Endothelial cell of umbilical vein (primary cell): ENCODE measurements at regions of chr1 and their contacts with region 1.

Region 1: GRCh38 chr1:221741711-221742554 is at the start of gene DUSP10:
- DNase-seq: peak; percentile 100
- H3K4me3 ChIP-seq: peak within 1 kb of the TSS; percentile 39 to 84 (median 64)
- H3K27ac ChIP-seq: peak within 1 kb of the TSS; percentile 94
- H3K4me1 ChIP-seq: peaks cover 13% of the 10 kb centered on the region
- H3K27me3 ChIP-seq: peaks cover 7 to 13% of the 10 kb centered on the region in 2 experiments
- CTCF ChIP-seq: no peak
- POLR2A ChIP-seq: no peak
- total RNA-seq, gene DUSP10: 1.6 and 1.9 TPM in 2 replicates

Region 2: GRCh38 chr1:220879076-220879508 is 862.8 kb before region 1 on chr1 and contains the start of gene HLX:
- CTCF ChIA-PET with region 1: no interaction called
- POLR2A ChIA-PET with region 1: no interaction called
- dilution Hi-C with region 1: no loop called
- intact Hi-C with region 1: loop called (anchors 1 kb)
- DNase-seq: peak; percentile 89
- H3K4me3 ChIP-seq: peak within 1 kb of the TSS; percentile 80 to 87 (median 82)
- H3K27ac ChIP-seq: peak within 1 kb of the TSS; percentile 35
- H3K4me1 ChIP-seq: peaks cover 41% of the 10 kb centered on the region
- H3K27me3 ChIP-seq: peaks cover 6 to 15% of the 10 kb centered on the region in 2 experiments
- CTCF ChIP-seq: no peak
- POLR2A ChIP-seq: no peak
- total RNA-seq, gene HLX: 33.5 and 39.1 TPM in 2 replicates

Region 3: GRCh38 chr1:221263831-221264767 is 477.8 kb before region 1 on chr1:
- CTCF ChIA-PET with region 1: interaction called, 9 read pairs
- POLR2A ChIA-PET with region 1: interaction called, 3 read pairs
- dilution Hi-C with region 1: no loop called
- intact Hi-C with region 1: loop called (anchors 5 kb)
- DNase-seq: peak; percentile 79
- H3K4me3 ChIP-seq: no peak overlapping the region
- H3K27ac ChIP-seq: peak overlapping the region; percentile 34
- H3K4me1 ChIP-seq: peaks cover 7% of the 10 kb centered on the region
- H3K27me3 ChIP-seq: no peaks in the 10 kb centered on the region
- CTCF ChIP-seq: peak; percentile 64 to 71
- POLR2A ChIP-seq: no peak

Region 4: GRCh38 chr1:221761354-221762002 is 19.5 kb after region 1 on chr1:
- CTCF ChIA-PET with region 1: interaction called, 13 read pairs
- POLR2A ChIA-PET with region 1: no interaction called
- dilution Hi-C with region 1: no loop called
- intact Hi-C with region 1: loop called (anchors 1 kb)
- DNase-seq: no peak
- H3K4me3 ChIP-seq: no peak overlapping the region
- H3K27ac ChIP-seq: peak overlapping the region; percentile 52
- H3K4me1 ChIP-seq: peaks cover 60% of the 10 kb centered on the region
- H3K27me3 ChIP-seq: no peaks in the 10 kb centered on the region
- CTCF ChIP-seq: no peak
- POLR2A ChIP-seq: no peak

Region 5: DNA sequence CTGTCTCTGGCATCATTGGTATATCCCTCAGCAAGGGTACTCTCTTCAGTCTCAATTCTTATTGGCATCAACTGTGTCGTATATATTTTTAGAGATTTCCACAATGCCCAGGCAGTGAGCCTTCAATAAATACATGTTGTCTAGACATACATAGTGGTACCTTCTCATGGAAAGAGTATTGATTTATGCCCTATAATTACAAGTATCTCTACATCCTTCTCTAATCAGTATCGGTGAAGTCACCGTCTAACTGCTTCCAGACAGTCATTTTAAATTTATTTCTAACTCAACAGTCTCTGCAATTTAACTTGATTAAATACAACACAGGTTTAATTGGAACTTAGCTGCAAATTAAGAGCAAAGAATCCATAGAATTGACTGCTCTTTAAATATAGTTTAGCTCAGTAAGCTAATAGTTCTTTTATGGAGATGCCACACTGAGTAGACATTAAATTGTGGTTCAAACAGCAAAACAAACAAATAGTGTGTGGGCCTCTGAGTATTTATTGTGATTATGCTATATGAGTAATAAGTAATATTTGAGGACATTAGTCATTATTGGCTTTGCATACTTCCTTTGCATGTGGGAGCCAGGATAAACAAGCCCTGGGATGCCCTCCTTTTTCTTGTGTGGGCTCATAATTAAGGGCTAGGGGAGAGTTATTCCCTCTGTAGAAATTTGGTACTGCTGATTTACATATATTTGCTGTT is 126.8 kb after region 1 on chr1:
- CTCF ChIA-PET with region 1: no interaction called
- POLR2A ChIA-PET with region 1: interaction called, 4 read pairs
- dilution Hi-C with region 1: no loop called
- intact Hi-C with region 1: loop called (anchors 1 kb)
- DNase-seq: peak; percentile 79
- H3K4me3 ChIP-seq: no peak overlapping the region
- H3K27ac ChIP-seq: peak overlapping the region; percentile 16
- H3K4me1 ChIP-seq: peaks cover 13% of the 10 kb centered on the region
- H3K27me3 ChIP-seq: peaks cover 0 to 2% of the 10 kb centered on the region in 2 experiments
- CTCF ChIP-seq: no peak
- POLR2A ChIP-seq: no peak

Region 6: GRCh38 chr1:222009105-222009730 is 267.3 kb after region 1 on chr1:
- CTCF ChIA-PET with region 1: interaction called, 11 read pairs
- POLR2A ChIA-PET with region 1: no interaction called
- dilution Hi-C with region 1: no loop called
- intact Hi-C with region 1: loop called (anchors 1 kb)
- DNase-seq: peak; percentile 12
- H3K4me3 ChIP-seq: no peak overlapping the region
- H3K27ac ChIP-seq: no peak overlapping the region
- H3K4me1 ChIP-seq: no peaks in the 10 kb centered on the region
- H3K27me3 ChIP-seq: no peaks in the 10 kb centered on the region
- CTCF ChIP-seq: peak; percentile 7 to 13
- POLR2A ChIP-seq: no peak